Heart left ventricle (tissue), 16 donors: ENCODE measurements at regions of chr3 and their contacts with region 1.

Region 1: DNA sequence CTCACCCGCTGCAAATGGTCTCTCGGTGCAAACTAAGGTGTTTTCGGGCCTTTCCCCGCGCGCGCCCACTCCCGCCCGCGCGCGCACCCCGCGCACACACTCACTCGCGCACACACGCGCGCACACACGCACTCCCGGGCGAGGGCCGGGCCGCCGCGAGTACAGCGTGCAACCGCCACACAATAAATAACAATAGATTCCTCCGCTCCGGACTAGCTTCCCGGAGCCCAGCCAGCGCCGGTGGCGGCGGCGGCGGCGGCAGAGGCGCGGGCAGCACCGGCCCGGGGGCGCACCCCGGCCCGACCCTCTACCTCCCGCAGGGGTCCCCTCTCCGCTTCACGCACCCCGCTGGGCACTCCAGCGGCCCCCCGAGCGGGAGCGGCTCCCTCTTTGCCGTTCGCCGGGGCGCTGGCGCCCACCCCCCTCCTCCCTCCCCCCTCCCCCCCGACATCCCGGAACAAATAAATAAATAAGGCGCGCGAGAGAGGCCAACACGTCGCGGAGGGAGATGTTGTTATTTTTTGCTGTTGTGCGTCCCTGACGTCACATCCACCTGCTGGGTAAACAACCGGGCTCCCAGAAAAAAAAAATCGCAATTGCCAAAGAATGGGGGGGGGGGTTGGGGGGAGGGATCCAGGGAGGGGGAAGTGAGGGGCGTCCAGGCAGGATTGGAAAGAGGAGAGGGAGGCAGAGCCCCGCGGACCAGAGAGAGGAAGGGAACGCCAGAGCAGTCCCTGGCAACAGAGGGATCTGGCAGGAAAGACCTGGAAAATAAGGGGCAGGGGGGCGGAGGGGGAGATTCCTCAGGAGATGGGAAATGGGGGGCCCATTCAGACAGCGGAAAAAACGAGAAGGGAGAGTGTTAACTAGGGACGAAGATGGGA is at the start of gene FOXP1:
- DNase-seq: peak; percentile 77 to 89 (median 80)
- ATAC-seq: peak; percentile 44 to 80 (median 72)
- H3K4me3 ChIP-seq: peak within 1 kb of the TSS; percentile 65 to 95 (median 82)
- H3K27ac ChIP-seq: peak within 1 kb of the TSS; percentile 92 to 99 (median 98)
- H3K4me1 ChIP-seq: peaks cover 0 to 46% (median 21%) of the 10 kb centered on the region in 12 donors
- H3K27me3 ChIP-seq: no peaks in the 10 kb centered on the region
- CTCF ChIP-seq: no peak
- POLR2A ChIP-seq: peak in 1 of 2 donors; percentile 65
- total RNA-seq, gene FOXP1: 33.0 to 67.8 (median 44.5) TPM

Region 2: GRCh38 chr3:70716832-70717231 is 867.0 kb before region 1 on chr3:
- intact Hi-C with region 1: loop called in 7 of 10 experiments (anchors 2 to 10 kb)
- DNase-seq: peak in 3 of 5 donors; percentile 15 to 34 (median 33)
- ATAC-seq: peak in 3 of 4 donors; percentile 62 to 78 (median 70)
- H3K4me3 ChIP-seq: no peak overlapping the region
- H3K27ac ChIP-seq: no peak overlapping the region
- H3K4me1 ChIP-seq: peaks cover 0 to 7% (median 0%) of the 10 kb centered on the region in 12 donors
- H3K27me3 ChIP-seq: no peaks in the 10 kb centered on the region
- CTCF ChIP-seq: peak; percentile 32 to 74 (median 52)
- POLR2A ChIP-seq: no peak

Region 3: DNA sequence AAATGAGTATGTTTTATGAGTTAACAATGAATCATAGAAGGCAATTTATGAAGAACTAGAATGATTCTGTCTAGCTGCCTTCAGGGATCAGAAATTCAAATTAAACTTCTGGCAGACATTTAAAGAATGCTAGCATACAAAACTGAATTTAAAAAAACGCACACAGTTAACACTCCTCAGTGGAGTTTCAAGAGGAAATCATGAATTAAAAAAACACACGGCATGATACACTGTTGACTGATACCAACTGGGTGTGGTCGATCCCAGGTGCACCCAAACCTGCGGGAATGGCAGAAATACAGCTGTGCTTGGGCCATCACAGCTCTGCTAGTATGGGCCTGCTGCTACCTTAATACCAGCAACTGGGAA is 526.3 kb before region 1 on chr3:
- intact Hi-C with region 1: loop called in 6 of 10 experiments (anchors 2 to 5 kb)
- DNase-seq: no peak
- ATAC-seq: no peak
- H3K4me3 ChIP-seq: peak overlapping the region in 6 of 12 donors; percentile 2 to 26 (median 16)
- H3K27ac ChIP-seq: peak overlapping the region; percentile 22 to 97 (median 82)
- H3K4me1 ChIP-seq: peaks cover 0 to 100% (median 82%) of the 10 kb centered on the region in 12 donors
- H3K27me3 ChIP-seq: no peaks in the 10 kb centered on the region
- CTCF ChIP-seq: no peak
- POLR2A ChIP-seq: no peak

Region 4: GRCh38 chr3:71076361-71077002 is 507.3 kb before region 1 on chr3:
- intact Hi-C with region 1: no loop called
- DNase-seq: no peak
- ATAC-seq: peak in 1 of 4 donors; percentile 26
- H3K4me3 ChIP-seq: no peak overlapping the region
- H3K27ac ChIP-seq: no peak overlapping the region
- H3K4me1 ChIP-seq: peaks cover 0 to 41% (median 14%) of the 10 kb centered on the region in 12 donors
- H3K27me3 ChIP-seq: no peaks in the 10 kb centered on the region
- CTCF ChIP-seq: no peak
- POLR2A ChIP-seq: no peak

Region 5: DNA sequence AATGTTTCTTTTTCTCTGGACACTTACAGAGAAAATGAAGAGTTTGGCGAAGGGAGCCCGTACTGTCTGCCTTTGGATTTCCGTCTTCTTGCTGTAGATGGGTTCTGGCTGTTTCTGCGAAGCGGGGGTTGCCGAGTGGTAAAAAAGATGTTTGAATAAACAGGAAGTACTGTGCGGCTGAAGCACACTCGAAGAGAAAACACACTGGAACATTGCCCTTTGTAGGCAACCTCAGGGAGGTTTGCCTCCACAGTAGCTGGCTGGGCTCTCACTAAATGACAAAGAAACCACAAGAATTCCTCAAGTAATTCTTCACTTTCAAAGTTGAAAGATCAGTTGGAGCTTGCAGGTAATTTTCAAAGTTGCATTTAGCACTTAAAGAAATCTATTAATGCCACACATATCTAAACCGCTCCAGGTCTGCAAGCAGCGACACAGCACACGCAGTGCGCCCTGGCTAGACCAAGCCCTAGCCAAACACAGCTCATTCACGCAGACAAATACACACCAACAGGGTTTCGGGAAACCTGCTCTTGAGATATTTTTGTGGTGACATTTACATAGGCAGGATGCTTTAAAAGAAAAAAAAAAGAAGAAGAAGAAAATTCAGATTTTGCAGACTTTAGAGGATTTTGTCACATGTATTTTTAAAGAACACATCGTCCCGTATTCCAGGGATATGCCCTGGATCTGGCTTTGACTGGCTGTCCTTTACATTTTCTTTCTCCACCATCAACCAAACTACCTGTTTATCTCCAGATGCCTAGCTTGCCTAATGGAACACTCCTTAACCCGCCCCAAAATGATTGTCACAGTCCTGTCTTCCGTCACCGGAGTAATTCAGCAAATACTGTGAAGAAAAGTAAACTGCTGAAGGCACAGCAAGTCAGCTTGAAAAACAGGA is 453.1 kb before region 1 on chr3:
- intact Hi-C with region 1: loop called in 6 of 10 experiments (anchors 2 to 10 kb)
- DNase-seq: peak; percentile 60 to 74 (median 70)
- ATAC-seq: peak; percentile 59 to 76 (median 70)
- H3K4me3 ChIP-seq: peak overlapping the region; percentile 36 to 67 (median 55)
- H3K27ac ChIP-seq: peak overlapping the region; percentile 78 to 94 (median 88)
- H3K4me1 ChIP-seq: peaks cover 3 to 80% (median 54%) of the 10 kb centered on the region in 12 donors
- H3K27me3 ChIP-seq: no peaks in the 10 kb centered on the region
- CTCF ChIP-seq: no peak
- POLR2A ChIP-seq: peak in 1 of 2 donors; percentile 43

Region 6: DNA sequence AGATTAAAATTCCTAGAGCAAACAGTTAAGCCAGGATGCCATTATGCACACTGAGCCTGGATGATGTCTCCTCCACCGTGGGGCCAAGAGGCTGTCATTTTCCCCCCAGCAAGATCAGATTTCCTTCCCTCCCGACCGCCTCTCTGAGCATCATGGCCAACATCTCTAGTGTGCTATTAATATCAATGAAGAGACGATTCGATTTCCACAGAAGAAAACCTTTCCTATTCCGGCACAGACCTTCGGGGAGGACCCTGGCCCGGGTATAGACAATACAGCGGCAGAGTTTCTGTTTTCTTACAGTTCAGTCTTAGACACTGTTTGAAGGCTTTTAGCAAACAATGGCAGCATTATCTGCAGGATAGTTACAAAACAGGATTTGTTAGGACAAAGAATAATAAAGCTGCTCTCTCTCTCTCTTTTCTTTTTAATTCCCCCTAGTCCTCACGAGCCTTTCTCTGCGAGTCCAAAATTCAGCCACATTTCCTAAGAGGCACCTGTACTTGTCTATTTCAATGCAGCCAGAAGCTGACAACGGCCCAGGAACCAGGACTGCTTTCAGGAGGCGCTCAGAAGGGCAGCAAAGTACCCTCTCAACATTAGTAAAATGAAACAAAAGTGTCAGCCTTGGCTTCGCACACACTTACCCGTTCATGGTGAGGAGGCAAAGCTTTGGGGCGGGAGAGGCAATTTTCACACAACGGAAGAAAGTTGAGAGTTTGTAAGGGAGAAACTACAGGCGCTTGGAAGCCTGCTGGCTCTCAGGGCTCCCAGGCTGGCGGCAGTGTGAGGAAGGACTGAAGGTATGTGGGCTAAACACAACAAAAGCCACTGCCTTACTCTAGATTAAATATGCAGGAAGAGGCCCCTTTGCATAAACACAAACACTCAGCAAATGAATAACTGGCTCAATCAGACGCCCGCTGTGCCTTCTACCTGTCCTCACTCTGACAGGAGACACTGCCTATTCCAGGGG is 278.3 kb before region 1 on chr3:
- intact Hi-C with region 1: loop called in 9 of 10 experiments (anchors 2 to 10 kb)
- DNase-seq: peak in 4 of 5 donors; percentile 37 to 49 (median 45)
- ATAC-seq: peak; percentile 82 to 94 (median 86)
- H3K4me3 ChIP-seq: peak overlapping the region in 11 of 12 donors; percentile 2 to 51 (median 45)
- H3K27ac ChIP-seq: peak overlapping the region; percentile 45 to 82 (median 72)
- H3K4me1 ChIP-seq: peaks cover 0 to 48% (median 26%) of the 10 kb centered on the region in 12 donors
- H3K27me3 ChIP-seq: no peaks in the 10 kb centered on the region
- CTCF ChIP-seq: no peak
- POLR2A ChIP-seq: no peak

Region 7: DNA sequence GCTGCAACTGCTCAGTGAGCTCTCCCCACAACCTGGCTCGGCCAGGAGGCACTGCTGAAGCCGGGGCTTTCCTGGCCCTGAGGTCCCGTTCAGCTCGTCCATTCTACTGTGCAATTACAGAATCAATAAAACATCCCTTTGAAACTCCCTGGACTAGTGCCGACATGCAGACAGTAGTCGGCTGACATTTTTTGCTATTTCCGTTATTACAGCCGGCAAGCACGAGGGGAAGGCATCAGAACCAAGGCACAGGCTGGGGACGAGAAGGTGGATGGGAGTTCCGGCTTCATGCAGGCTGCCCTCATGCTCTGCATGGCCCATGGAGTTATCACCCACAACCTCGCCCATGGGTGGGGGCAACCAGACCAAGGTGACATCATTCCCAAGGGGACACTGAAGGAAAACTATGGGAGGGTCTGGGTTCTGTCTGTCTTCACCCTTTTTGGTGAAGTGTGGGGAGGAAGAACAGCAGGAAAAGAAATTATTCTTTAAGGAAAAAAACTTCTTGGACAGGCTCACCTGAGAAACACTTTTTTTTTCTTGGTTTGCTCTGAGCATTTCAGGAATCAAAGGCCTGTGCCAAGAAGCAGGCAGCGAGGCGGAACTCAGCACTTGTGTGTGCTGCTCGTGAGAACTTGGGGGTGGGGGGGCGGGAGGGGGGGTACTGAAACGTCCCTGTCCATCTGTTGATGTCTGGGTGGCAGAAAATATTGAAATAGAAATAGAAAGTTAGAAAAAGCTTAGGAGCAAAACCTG is 154.8 kb before region 1 on chr3:
- intact Hi-C with region 1: loop called in 8 of 10 experiments (anchors 5 to 10 kb)
- DNase-seq: peak in 4 of 5 donors; percentile 46 to 66 (median 52)
- ATAC-seq: peak; percentile 23 to 68 (median 54)
- H3K4me3 ChIP-seq: peak overlapping the region in 8 of 12 donors; percentile 6 to 38 (median 18)
- H3K27ac ChIP-seq: peak overlapping the region in 11 of 12 donors; percentile 8 to 60 (median 47)
- H3K4me1 ChIP-seq: peaks cover 0 to 54% (median 34%) of the 10 kb centered on the region in 12 donors
- H3K27me3 ChIP-seq: no peaks in the 10 kb centered on the region
- CTCF ChIP-seq: no peak
- POLR2A ChIP-seq: no peak

Region 8: GRCh38 chr3:71542521-71543370 is 41.1 kb before region 1 on chr3:
- intact Hi-C with region 1: loop called in 2 of 10 experiments (anchors 5 kb)
- DNase-seq: peak; percentile 80 to 91 (median 88)
- ATAC-seq: peak; percentile 92 to 99 (median 99)
- H3K4me3 ChIP-seq: peak overlapping the region in 8 of 12 donors; percentile 1 to 41 (median 28)
- H3K27ac ChIP-seq: peak overlapping the region in 11 of 12 donors; percentile 8 to 81 (median 54)
- H3K4me1 ChIP-seq: peaks cover 0 to 46% (median 22%) of the 10 kb centered on the region in 12 donors
- H3K27me3 ChIP-seq: no peaks in the 10 kb centered on the region
- CTCF ChIP-seq: no peak
- POLR2A ChIP-seq: no peak

Region 9: GRCh38 chr3:71652781-71653413 is 69.1 kb after region 1 on chr3:
- intact Hi-C with region 1: no loop called
- DNase-seq: peak in 2 of 5 donors; percentile 24 to 48
- ATAC-seq: peak in 3 of 4 donors; percentile 67 to 79 (median 79)
- H3K4me3 ChIP-seq: no peak overlapping the region
- H3K27ac ChIP-seq: peak overlapping the region in 1 of 12 donors; percentile 13
- H3K4me1 ChIP-seq: peaks cover 0 to 8% (median 1%) of the 10 kb centered on the region in 12 donors
- H3K27me3 ChIP-seq: no peaks in the 10 kb centered on the region
- CTCF ChIP-seq: peak; percentile 21 to 68 (median 50)
- POLR2A ChIP-seq: no peak